Left ventricle myocardium superior (tissue), 1 donor: ENCODE measurements at regions of chr11 and their contacts with region 1.

Region 1: GRCh38 chr11:72483412-72484186 is 49.3 kb upstream of the CLPB start:
- DNase-seq: no peak
- ATAC-seq: peak; percentile 72

Region 2: GRCh38 chr11:72069787-72070251 is 413.8 kb before region 1 on chr11:
- intact Hi-C with region 1: no loop called
- DNase-seq: peak; percentile 83
- ATAC-seq: peak; percentile 97

Region 3: DNA sequence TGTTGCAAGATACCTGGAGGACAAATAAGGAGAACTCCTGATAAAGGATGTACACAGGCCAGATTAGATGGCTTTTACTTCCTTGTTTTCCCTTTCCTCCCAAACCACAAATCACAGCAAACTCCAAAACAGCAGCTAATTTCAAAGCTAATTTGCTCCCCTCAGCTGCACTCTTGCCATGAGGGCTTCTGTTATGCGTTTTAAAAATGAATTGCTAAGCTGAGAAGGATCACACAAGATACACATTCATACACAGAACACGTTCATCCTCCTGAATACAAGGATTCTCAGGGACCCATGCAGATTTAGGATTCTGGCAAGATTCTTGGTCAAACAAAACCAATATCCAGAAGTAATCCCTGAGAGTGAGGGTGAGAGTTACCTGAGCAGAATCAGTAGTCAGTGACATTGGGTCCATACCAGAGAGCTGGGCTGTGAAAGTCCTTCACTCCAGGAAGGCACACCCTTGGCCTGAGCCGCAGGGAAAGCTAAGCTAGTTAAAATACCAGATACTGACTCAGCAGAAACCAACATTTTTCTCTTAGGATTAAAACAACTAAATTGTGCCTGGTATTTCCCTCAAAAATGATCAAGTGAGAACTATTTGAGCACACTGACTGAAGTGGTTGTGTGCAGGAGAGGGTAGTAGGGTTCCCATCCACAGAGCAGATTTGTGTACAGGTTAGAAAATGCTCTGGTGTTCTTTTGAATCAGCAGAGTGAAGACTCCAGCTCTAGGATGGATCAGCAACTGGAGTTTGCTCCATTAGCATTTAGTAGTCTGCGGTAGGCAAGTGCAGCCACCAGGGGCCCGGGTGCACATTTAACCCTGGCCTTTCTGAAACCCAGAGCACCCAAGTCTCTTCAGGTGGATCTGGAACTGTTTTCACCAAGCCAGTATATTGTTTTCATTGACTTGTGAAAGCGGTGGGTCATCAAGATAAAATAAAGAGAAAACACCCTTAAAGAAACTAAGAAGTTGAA is 51.3 kb after region 1 on chr11:
- intact Hi-C with region 1: no loop called
- DNase-seq: no peak
- ATAC-seq: no peak

Region 4: DNA sequence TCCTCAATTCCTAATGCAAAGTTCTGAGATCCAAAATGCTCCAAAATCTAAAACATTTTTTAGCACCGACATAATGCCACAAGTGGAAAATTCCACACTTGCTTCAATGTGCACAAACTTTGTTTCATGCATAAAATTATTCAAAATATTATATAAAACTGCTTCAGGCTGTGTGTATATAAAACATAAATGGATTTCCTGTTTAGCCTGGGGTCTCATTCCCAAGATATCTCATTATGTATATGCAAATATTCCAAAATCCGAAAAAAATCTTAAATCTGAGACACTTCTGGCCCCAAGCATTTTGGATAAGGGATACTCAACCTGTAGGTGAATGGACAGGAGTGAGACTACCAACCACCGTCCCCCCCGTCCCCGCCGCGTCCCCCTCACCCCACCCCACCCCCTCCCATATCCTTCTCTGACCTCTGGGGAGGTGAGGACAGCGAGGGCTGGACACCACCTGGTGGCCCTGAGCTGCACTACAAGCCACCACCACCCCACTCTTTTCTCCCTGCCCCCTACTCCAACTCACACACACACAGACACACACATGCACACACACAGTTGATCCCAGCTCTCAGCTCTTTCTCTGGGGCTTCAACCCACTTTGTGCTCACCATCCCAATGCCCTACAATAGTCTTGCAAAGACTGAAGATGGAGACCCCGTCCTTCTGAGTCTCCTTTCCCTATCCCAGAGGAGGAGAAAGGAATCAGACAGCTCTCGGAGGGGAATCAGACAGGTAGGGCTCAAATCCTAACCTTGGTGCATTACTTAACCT is 89.7 kb after region 1 on chr11:
- intact Hi-C with region 1: loop called (anchors 10 kb)
- DNase-seq: peak; percentile 53
- ATAC-seq: peak; percentile 70

Region 5: GRCh38 chr11:72613977-72614376 is 130.4 kb after region 1 on chr11:
- intact Hi-C with region 1: no loop called
- DNase-seq: peak; percentile 60
- ATAC-seq: peak; percentile 45